ENCODE measurements at regions of chr4 and their contacts with region 1.

Region 1: GRCh38 chr4:40719008-40719623 is 30.6 kb upstream of the NSUN7 start:
- DNase-seq: peak; percentile 61

Region 2: DNA sequence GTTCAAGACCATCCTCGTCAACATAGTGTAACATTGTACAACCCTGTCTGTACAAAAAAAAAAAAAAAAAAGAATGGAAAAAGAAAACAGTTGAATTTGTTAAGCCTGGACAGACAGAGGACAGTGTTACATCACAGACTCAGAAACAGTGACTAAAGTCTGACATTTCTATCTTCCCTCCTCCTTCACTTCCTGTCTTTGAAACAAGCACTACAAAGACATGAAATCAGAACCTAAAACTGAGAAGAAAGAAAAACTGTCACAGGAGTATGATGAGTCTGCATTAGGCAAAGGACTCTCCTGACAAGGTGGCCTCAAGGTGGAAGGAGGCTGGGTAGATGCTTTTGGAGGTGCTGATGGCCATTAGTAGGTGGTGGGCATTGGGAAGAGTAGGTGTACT is 216.2 kb before region 1 on chr4:
- in situ Hi-C with region 1: no loop called
- DNase-seq: no peak

Region 3: GRCh38 chr4:40576631-40577480 is 142.3 kb before region 1 on chr4:
- in situ Hi-C with region 1: loop called (anchors 25 kb)
- DNase-seq: peak; percentile 64

Region 4: DNA sequence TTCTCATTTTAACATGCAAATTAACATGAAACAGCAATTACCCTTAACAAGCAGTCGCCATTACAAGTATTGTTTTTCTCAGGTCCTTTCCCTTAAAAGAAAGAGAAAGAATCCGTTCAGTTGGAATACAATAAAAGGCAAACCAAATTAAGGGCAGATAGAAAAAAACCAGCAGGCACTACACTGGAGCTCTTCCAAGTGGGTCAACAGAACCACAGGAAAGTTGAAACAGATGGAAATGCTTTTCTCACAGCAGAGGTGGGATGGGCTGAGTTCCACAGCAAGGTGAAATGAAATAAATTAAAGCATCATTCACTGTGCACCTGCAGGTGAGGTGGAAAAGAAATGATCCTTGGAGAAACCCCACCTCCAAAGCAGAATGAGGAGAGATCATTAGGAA is 392.7 kb after region 1 on chr4:
- in situ Hi-C with region 1: no loop called
- DNase-seq: peak; percentile 78

Measured in G401 (cell line).